CD14-positive monocyte (primary cell): ENCODE measurements at regions of chr4 and their contacts with region 1.

Region 1: GRCh38 chr4:11929080-11929479 is 500.4 kb upstream of the HS3ST1 start:
- DNase-seq: no peak
- H3K4me3 ChIP-seq: no peak overlapping the region
- H3K4me3 Mint-ChIP-seq: no peak overlapping the region
- H3K27ac ChIP-seq: no peak overlapping the region
- H3K27ac Mint-ChIP-seq: no peak overlapping the region
- H3K4me1 ChIP-seq: no peaks in the 10 kb centered on the region
- H3K4me1 Mint-ChIP-seq: peaks cover 6% of the 10 kb centered on the region
- H3K27me3 ChIP-seq: no peaks in the 10 kb centered on the region
- H3K27me3 Mint-ChIP-seq: peaks cover 0 to 1% (median 0%) of the 10 kb centered on the region in 3 donors
- CTCF ChIP-seq: no peak

Region 2: DNA sequence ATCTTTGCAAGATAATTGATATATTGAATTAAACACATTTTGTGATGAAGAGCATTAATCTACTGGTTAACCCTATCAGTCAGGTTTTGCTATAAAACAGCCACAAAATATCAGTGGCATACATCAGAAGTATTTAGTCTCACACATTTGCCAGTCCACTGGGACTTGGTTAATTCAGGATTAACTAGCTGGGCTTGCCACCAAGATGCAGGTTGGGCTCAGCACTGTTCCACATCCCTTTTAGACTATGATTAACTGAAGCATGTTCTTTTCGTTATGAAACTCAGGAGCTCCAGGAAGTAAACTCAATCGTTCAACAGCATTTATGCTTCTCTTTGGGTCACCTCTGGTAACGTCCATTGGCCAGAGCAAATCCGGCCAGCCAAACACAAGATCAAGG is 37.7 kb after region 1 on chr4:
- intact Hi-C with region 1: loop called in 1 of 2 experiments (anchors 2 kb)
- DNase-seq: no peak
- H3K4me3 ChIP-seq: no peak overlapping the region
- H3K4me3 Mint-ChIP-seq: no peak overlapping the region
- H3K27ac ChIP-seq: no peak overlapping the region
- H3K27ac Mint-ChIP-seq: no peak overlapping the region
- H3K4me1 ChIP-seq: no peaks in the 10 kb centered on the region
- H3K4me1 Mint-ChIP-seq: no peaks in the 10 kb centered on the region
- H3K27me3 ChIP-seq: no peaks in the 10 kb centered on the region
- H3K27me3 Mint-ChIP-seq: no peaks in the 10 kb centered on the region
- CTCF ChIP-seq: no peak

Region 3: DNA sequence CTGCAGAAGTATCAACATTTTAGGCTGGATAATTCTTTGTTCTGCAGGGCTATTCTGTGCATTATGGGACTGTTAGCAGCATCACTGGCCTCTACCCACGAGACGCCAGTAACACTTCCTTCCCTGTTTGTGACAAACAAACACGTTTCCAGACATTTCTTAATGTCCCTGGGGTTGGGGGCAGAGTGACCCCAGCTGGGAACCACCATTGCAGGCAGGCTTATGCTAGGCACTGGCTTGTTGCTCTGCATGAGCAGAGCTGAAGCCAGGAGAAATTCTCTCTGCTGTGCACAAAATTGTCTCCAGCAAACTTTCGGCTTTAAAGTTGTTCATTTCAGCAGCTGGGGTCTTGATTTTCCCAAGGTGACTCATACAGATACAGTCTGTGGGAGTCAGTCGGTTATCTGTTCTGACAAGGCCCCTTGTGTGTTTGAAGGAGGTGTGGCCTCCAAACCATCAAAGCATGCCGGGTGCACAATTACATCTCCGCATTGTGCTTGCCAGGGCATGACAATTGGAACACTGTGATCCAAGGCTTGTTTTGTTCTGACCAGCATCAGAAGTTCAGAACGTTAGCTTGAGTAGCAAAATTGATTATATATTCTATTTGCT is 1854.8 kb after region 1 on chr4:
- intact Hi-C with region 1: no loop called
- DNase-seq: no peak
- H3K4me3 ChIP-seq: no peak overlapping the region
- H3K4me3 Mint-ChIP-seq: no peak overlapping the region
- H3K27ac ChIP-seq: no peak overlapping the region
- H3K27ac Mint-ChIP-seq: no peak overlapping the region
- H3K4me1 ChIP-seq: peaks cover 5 to 7% of the 10 kb centered on the region in 2 donors
- H3K4me1 Mint-ChIP-seq: peaks cover 6% of the 10 kb centered on the region
- H3K27me3 ChIP-seq: no peaks in the 10 kb centered on the region
- H3K27me3 Mint-ChIP-seq: peaks cover 0 to 5% (median 0%) of the 10 kb centered on the region in 3 donors
- CTCF ChIP-seq: no peak